ENCODE measurements at regions of chr6 and their contacts with region 1.

Region 1: DNA sequence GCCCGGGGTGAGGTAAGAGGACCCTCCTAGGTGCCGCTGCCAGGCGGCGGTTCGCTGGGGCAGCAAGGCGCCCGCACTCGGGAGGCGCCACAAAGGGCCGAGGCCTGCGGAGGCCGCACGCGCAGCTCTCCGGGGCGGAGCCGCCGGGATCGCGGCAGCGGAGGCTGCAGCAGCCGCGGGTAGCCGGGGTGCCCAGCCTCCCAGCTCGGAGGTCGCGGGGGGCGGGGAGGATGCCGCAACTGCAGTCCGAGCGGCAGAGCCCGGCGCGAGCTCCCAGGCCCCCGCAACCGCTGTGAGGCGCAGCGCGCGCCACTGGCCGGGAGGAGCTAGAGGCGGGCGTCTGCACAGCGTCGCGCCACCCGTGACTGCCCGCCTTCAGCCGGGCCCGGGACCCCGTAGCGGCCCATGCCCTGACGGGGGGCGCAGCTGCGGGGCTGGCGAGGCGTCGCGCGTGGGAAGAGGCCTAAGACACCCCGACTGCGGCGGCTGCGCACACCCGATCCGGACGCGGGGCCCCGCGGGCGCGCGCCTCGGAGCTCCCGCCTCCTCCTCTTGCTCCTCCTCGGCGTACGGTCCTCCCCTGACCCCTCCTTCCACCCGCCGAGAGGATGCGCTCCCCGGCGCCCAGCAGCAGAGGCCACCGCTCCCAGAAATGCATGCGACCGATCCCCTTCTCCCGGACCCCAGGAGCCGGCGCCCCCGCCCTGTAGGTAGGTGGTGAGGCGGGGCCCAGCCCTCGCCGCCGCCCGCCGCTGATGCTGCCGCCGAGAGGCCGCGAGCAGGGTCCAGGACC is at the start of gene NCOA7:
- DNase-seq: peak; percentile 81
- H3K4me3 Mint-ChIP-seq: peak within 1 kb of the TSS; percentile 90
- H3K27ac Mint-ChIP-seq: peak within 1 kb of the TSS; percentile 96
- H3K4me1 Mint-ChIP-seq: peaks cover 51% of the 10 kb centered on the region
- H3K27me3 Mint-ChIP-seq: no peaks in the 10 kb centered on the region
- total RNA-seq, gene NCOA7: 39.2 to 43.1 TPM

Region 2: DNA sequence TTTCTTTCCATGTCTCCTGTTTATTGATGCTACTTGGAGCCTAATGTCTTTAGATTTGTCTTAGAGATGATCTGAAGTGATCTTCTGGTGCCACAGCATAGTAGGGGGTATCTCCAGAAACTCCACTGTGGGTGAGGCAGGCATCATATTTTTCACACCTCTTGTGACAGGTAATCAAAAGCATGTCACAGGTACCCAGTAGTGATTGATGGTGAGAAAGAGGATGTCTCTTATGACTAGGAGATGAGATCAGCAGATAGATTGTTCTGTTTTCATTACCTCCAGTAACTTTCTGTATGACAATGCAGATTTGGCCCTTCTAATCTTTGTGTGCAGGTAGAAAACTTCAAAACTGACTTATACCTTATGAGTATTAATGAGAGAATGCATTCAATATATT is 13.7 kb after region 1 on chr6:
- CTCF ChIA-PET with region 1: interaction called, 23 read pairs
- intact Hi-C with region 1: loop called (anchors 1 kb)
- DNase-seq: peak; percentile 67
- H3K4me3 Mint-ChIP-seq: no peak overlapping the region
- H3K27ac Mint-ChIP-seq: no peak overlapping the region
- H3K4me1 Mint-ChIP-seq: peaks cover 63% of the 10 kb centered on the region
- H3K27me3 Mint-ChIP-seq: no peaks in the 10 kb centered on the region

Region 3: DNA sequence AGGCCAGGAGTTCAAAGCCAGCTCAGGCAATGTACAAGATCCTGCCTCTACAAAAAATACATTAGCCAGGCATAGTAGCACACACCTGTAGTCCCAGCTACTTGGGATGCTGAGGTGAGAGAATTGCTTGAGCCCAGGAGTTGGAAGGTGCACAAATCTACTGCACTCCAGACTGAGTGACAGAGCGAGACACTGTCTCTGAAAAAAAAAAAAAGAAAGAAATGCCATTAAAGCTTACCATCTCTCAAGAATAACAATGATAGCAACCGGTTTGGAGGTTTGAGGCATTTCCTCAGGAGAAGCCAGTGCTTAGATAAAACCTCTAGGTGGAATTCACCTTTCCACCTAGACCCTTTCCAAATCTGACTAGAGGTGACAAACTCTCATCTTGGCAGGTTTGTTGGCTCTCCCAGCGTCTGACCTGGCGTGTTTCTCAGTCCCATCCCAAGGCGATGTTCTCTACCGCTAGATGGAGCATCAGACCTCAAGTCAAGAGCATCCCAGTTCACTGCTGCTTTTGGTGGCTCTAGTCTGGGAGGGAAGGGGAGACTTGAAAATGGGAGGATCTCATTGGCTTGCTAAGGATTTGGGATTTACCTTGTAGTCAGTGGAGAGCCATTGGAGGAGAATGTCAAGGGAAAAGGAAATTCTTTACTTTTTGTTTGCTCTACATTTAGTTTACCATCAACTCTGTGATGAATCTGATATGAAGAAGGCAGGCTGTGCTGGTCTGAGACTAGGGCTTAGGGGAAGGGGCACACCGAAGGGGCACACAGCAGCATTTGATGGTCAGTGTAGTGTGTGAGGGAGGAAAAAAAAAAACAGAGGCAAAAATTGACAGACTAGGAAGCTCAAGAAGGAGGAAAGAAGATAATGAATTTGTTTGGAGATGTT is 68.1 kb after region 1 on chr6:
- CTCF ChIA-PET with region 1: interaction called, 4 read pairs
- intact Hi-C with region 1: loop called (anchors 2 kb)
- DNase-seq: peak; percentile 57
- H3K4me3 Mint-ChIP-seq: no peak overlapping the region
- H3K27ac Mint-ChIP-seq: no peak overlapping the region
- H3K4me1 Mint-ChIP-seq: no peaks in the 10 kb centered on the region
- H3K27me3 Mint-ChIP-seq: no peaks in the 10 kb centered on the region

Region 4: DNA sequence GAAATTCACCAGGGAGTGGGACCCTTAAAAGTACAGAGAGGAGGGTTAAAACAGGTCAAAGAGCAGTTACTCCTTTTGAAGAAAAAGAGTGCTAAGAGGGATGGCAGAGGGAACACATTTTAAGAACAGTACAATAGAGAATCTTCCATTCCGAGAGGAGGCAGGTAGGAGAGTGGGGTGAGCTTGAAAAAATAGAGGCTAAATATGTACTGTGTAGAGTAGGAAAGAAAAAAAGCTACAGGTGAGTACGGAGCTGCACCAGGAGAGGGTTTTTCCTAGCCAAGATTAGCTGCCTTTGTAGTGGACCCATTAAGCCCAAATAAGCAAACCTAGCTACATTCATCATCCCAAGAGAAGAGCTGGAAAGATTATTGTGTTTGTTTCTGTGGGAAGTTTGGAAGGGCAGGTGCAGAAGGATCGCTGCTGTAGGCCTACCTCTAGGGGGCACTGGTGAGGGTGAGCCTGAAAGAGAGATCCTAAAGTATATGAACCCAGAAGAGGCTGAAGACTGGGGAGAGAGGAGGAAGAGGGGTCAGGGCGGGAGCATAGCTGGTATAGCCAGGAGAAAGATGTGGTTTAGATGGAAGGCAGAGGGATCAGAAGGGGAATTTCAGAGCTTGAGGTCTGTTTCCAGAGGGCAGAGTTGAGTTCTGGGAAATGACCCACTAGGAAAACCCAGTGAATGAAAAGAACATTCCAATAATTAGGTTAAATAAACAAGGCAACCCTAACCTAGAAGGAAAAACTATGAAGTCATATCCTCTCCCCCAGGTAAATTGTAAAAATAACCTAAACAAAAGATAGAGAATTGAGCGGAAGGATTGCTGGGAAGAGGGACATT is 115.8 kb after region 1 on chr6:
- CTCF ChIA-PET with region 1: interaction called, 16 read pairs
- intact Hi-C with region 1: no loop called
- DNase-seq: peak; percentile 72
- H3K4me3 Mint-ChIP-seq: no peak overlapping the region
- H3K27ac Mint-ChIP-seq: peak overlapping the region; percentile 20
- H3K4me1 Mint-ChIP-seq: peaks cover 25% of the 10 kb centered on the region
- H3K27me3 Mint-ChIP-seq: no peaks in the 10 kb centered on the region

Region 5: DNA sequence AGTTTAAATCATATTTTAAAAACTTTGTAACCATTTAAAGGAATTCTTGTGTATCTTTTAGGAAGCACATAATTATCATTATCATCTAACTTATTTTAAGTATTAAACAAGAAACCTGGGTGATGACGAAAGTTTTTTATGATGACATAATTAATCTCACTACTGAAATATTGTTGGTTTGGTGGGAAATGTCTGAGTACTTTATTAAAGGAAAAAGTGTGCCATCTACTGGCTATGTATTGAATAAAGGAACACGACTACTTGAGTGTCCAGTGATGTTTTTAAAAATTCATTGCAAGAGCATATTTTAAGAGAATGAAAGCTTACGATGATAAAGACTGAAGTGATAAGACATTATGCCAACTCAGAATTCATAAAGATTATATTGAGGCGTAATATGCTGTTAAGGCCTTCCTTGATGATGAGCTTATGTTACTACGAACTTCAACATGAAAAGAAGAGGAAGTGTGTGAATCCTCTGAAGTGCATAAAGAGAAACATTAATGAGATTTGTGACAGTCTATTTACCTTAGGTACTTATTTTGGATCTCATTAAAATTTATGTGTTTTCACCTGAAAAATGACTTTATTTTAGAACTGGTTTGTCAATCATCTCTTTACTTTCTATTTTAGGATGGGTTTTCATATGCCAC is 183.8 kb after region 1 on chr6:
- CTCF ChIA-PET with region 1: interaction called, 8 read pairs
- intact Hi-C with region 1: loop called (anchors 1 kb)
- DNase-seq: no peak
- H3K4me3 Mint-ChIP-seq: no peak overlapping the region
- H3K27ac Mint-ChIP-seq: no peak overlapping the region
- H3K4me1 Mint-ChIP-seq: peaks cover 7% of the 10 kb centered on the region
- H3K27me3 Mint-ChIP-seq: no peaks in the 10 kb centered on the region

Measured in activated naive CD4-positive, alpha-beta T cell treated with anti-CD3 and anti-CD28 coated beads for 36 hours (primary cell).